GM10248 (cell line): ENCODE measurements at regions of chr3 and their contacts with region 1.

Region 1: DNA sequence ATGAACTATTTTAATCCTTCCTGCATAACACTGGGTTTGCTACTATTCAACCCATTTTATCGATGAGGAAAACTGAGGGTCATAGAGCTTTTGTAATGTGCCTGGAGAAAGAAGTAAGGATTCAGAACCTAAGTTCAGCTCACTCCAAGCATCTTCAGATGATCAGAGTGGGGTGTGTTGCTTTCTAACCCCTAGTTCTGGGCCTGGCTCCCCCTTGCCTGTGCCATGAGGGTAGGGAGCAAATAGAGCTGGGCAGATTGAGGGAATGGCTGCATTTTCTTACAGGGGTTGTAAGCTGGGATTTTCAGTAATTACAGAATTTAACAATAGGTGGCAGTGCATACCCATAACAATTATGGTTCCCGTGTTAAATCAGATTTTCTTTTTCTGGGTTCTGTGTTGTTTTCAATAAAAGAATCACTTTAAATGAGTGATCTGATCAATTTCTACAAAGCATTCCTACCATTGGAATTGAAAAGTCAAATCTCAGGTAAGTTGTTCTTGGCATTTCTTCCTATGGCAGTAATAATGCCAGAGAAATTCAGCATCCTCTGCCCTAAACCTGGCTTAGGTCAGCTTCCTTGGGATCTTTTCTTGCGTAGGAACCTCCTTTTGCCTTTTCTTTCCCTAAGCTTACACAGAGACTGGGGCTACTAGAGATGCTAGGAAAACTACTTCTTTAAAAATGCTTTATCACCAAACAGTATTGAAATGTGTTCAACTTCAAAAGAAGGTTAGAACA is 103.8 kb upstream of the IL12A start:
- DNase-seq: peak; percentile 58
- CTCF ChIP-seq: peak; percentile 56

Region 2: DNA sequence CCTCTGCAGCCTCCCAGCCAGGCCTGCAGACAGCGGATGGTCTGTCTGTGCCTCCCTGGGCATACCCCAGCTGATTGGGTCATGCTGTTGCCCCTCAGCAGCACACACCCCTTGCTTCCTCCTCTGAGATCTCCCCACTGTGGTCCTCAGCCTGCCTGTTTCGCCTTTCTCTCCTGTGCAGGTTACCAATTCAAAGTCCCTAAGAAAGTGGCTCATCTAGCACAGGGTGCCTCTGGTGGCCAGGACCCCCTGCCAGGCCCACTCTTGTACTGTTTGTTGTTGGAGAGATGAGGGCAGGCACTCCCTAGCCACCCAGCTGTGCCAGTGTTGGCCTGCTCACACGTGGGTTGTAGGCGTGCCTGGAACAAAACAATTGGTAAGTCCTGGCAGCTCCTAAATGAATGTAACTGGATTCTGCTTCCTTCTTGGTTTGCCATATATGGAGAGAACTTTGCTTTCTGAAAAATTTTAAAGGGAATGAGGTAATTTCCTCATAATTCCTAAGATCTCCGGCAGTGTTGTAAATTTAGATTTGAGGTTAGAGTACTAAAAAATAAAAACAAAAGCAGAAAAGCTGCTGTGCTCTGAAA is 109.4 kb before region 1 on chr3:
- CTCF ChIA-PET with region 1: no interaction called
- POLR2A ChIA-PET with region 1: no interaction called
- DNase-seq: no peak
- CTCF ChIP-seq: no peak

Region 3: GRCh38 chr3:159865011-159865579 is 19.7 kb before region 1 on chr3:
- CTCF ChIA-PET with region 1: interaction called, 90 read pairs
- POLR2A ChIA-PET with region 1: no interaction called
- DNase-seq: no peak
- CTCF ChIP-seq: no peak

Region 4: DNA sequence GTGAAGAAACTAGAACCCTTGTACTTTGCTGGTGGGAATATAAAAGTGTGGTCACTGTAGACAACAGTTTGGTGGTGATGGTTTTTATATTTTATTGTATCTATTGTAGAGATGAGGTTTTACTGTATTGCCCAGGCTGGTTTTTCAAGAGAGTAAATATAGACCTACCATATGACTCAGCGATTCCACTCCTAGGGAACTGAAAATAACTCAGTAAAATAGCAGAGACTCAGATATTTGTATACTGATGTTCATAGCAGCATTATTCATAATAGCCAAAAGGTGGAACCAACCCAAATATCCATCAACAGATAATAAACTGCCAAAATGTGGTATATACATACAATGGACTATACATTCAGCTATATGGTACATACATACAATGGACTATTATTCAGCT is 35.0 kb after region 1 on chr3:
- CTCF ChIA-PET with region 1: interaction called, 10 read pairs
- POLR2A ChIA-PET with region 1: no interaction called
- DNase-seq: no peak
- CTCF ChIP-seq: no peak

Region 5: GRCh38 chr3:159994182-159994581 is 109.3 kb after region 1 on chr3:
- CTCF ChIA-PET with region 1: interaction called, 394 read pairs
- POLR2A ChIA-PET with region 1: no interaction called
- DNase-seq: no peak
- CTCF ChIP-seq: no peak

Region 6: GRCh38 chr3:160027541-160028195 is 142.8 kb after region 1 on chr3:
- CTCF ChIA-PET with region 1: interaction called, 25 read pairs
- POLR2A ChIA-PET with region 1: no interaction called
- DNase-seq: peak; percentile 53
- CTCF ChIP-seq: no peak